Dorsolateral prefrontal cortex (tissue), 120 donors: ENCODE measurements at regions of chr1 and their contacts with region 1.

Region 1: DNA sequence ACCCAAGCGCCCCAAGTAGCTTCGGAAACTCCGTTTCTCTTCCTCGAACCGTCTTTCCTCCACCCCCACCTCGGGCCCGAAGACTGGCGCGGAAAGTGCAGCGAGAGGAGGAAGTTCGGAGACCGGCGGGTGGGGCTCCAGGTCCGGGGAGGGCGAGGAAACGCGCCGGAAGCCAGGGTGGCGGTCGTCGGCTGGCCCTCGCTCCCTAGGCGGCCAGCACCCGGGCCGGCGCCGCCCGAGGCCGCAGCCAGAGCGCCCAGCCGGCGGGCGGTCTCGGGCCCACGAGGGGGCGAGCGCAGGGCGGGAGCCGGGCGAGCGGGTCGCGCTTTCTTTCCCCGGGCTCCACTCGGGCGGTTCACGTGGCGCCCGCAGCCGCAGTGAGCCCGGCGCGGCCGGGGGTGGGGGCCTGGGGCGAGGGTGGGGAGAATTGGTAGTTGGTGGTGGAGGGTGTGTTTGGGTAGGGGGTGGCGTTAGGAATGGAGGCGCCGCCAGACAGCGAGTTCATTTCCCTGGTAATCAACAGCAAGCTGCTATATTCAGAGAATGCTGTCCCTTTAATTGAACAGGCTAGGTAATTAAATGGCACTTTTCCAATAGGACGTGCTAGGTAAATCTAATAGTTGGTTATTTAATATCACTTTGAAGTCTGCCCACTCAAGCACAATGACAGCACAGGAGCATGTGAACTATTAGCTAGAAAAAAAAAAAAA is 6.7 kb downstream of the LMO4 start:
- DNase-seq: peak in 7 of 10 donors; percentile 34 to 77 (median 46)
- H3K4me3 ChIP-seq: peak overlapping the region; percentile 59 to 97 (median 82)
- H3K27ac ChIP-seq: peak overlapping the region in 55 of 59 donors; percentile 24 to 99 (median 83)
- H3K27me3 ChIP-seq: no peaks in the 10 kb centered on the region
- CTCF ChIP-seq: peak in 36 of 56 donors; percentile 5 to 72 (median 42)

Region 2: GRCh38 chr1:87410776-87411480 is 75.6 kb after region 1 on chr1:
- intact Hi-C with region 1: loop called in 1 of 2 experiments (anchors 2 kb)
- DNase-seq: peak; percentile 41 to 96 (median 93)
- H3K4me3 ChIP-seq: peak overlapping the region in 2 of 59 donors; percentile 3 to 27
- H3K27ac ChIP-seq: peak overlapping the region; percentile 35 to 95 (median 81)
- H3K27me3 ChIP-seq: no peaks in the 10 kb centered on the region
- CTCF ChIP-seq: peak in 5 of 56 donors; percentile 10 to 22 (median 19)

Region 3: DNA sequence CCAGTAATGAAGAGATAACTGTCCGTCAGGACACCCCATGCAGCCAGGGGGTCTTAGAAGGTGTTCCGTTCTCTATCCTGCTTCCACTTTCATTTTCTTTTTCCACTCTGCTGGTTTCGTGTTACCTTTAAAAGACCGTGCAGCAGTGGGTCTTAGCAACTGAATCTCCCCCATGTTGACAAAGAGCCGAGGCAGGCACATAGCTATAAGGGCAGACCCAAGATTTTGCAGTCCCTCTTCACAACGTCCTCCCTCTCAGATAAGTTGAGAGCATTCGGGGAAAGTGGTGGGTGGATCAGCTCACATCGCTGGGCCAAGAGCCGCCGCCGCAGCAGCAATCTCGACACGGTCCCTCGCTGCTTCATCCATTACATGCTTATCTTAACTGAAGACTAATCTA is 348.9 kb after region 1 on chr1:
- intact Hi-C with region 1: loop called in 1 of 2 experiments (anchors 10 kb)
- DNase-seq: peak in 5 of 10 donors; percentile 6 to 51 (median 29)
- H3K4me3 ChIP-seq: peak overlapping the region; percentile 12 to 68 (median 48)
- H3K27ac ChIP-seq: peak overlapping the region in 7 of 59 donors; percentile 11 to 59 (median 23)
- H3K27me3 ChIP-seq: no peaks in the 10 kb centered on the region
- CTCF ChIP-seq: no peak

Region 4: GRCh38 chr1:87953732-87954344 is 618.5 kb after region 1 on chr1:
- intact Hi-C with region 1: loop called in 1 of 2 experiments (anchors 10 kb)
- DNase-seq: peak in 8 of 10 donors; percentile 25 to 71 (median 62)
- H3K4me3 ChIP-seq: no peak overlapping the region
- H3K27ac ChIP-seq: peak overlapping the region in 8 of 59 donors; percentile 3 to 46 (median 41)
- H3K27me3 ChIP-seq: no peaks in the 10 kb centered on the region
- CTCF ChIP-seq: peak; percentile 45 to 87 (median 76)